Dendritic cell treated with granulocyte-macrophage colony-stimulating factor and Interleukin-4, amounts not matched to agents 40 ng/mL and 50 ng/mL, for 4 days (primary cell): ENCODE measurements at regions of chr2 and their contacts with region 1.

Region 1: DNA sequence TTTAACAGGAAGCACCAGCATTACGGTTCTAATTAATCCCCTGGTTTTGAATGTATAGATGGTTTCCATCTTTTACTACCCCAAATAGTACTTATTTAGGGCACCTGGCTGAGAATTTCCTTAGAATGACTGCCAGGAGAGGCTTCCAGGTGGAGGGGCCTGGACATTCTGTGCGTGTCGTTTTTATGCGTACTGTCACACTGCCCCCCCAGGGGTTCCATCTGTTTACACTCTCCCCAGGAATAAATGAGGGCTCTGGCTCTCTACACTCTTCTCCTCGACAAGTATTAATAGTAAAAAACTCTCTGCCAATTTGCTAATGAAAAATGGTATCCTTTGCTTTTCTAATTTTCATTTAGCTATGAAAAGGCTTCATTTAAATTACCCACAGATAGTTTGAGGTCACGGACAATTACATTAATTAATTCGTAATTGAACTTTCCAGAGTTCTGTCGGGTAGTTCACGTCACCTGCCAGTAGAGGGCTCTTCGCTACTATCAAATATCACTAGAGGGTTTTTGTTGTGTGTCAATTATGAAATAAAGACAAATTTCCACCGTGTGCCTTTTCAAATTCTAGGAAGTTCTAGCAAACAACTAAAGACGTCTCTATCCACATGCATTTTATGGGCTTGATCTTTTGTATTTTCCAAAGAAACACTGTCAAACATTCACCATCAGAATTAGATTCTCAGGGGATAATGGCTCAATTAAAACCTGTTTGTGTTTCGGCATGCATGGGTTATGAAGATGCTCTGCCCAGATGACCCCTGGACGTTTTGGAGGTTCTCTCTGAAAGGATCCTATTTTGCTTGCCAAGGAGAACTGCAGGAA is 88.8 kb upstream of the ASB18 start:
- H3K4me3 Mint-ChIP-seq: no peak overlapping the region
- H3K27ac Mint-ChIP-seq: no peak overlapping the region
- H3K4me1 Mint-ChIP-seq: no peaks in the 10 kb centered on the region
- H3K27me3 Mint-ChIP-seq: peaks cover 5% of the 10 kb centered on the region

Region 2: DNA sequence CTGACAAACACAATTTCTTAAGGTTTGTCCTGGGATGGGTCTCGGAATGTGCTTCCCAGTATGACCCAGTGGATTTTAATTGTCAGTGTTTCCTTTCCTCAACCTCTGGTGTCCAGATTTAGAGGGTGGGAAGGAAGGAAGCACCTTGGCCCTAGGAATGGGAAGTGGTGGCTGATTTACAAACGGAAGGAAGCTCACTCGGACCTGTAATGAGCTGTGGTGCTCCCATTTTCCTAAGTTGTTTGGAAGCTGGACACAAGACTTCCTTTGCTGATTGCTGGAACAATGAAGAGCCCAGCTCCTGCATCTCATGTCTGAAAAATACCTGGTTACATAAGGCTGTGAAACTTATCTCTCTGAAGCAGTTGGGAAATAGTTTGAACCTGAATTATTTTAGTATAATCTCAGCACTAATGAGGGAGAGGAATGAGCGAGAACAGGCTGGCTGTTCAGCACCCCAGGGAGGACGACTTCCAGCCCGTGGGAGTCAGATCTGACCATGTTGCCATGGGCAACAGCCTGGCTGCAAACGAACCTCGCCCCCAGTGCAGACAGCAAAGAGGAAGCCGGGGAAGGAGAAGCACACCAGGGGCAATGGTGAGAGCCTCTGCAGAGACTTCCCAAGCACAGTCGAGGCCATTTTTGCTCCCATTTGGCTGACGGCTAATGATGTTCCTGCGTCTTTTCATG is 14.3 kb before region 1 on chr2:
- intact Hi-C with region 1: no loop called
- H3K4me3 Mint-ChIP-seq: no peak overlapping the region
- H3K27ac Mint-ChIP-seq: no peak overlapping the region
- H3K4me1 Mint-ChIP-seq: peaks cover 8% of the 10 kb centered on the region
- H3K27me3 Mint-ChIP-seq: peaks cover 11% of the 10 kb centered on the region

Region 3: GRCh38 chr2:237026981-237027711 is 674.2 kb after region 1 on chr2:
- intact Hi-C with region 1: loop called (anchors 1 kb)
- H3K4me3 Mint-ChIP-seq: no peak overlapping the region
- H3K27ac Mint-ChIP-seq: no peak overlapping the region
- H3K4me1 Mint-ChIP-seq: no peaks in the 10 kb centered on the region
- H3K27me3 Mint-ChIP-seq: peaks cover 13% of the 10 kb centered on the region

Region 4: GRCh38 chr2:237072067-237072931 is 719.3 kb after region 1 on chr2:
- intact Hi-C with region 1: loop called (anchors 1 kb)
- H3K4me3 Mint-ChIP-seq: no peak overlapping the region
- H3K27ac Mint-ChIP-seq: no peak overlapping the region
- H3K4me1 Mint-ChIP-seq: peaks cover 6% of the 10 kb centered on the region
- H3K27me3 Mint-ChIP-seq: no peaks in the 10 kb centered on the region